ENCODE measurements at regions of chr1 and their contacts with region 1.

Region 1: GRCh38 chr1:245825128-245825901 is 670.5 kb downstream of the KIF26B start:
- DNase-seq: no peak
- ATAC-seq: peak; percentile 74

Region 2: DNA sequence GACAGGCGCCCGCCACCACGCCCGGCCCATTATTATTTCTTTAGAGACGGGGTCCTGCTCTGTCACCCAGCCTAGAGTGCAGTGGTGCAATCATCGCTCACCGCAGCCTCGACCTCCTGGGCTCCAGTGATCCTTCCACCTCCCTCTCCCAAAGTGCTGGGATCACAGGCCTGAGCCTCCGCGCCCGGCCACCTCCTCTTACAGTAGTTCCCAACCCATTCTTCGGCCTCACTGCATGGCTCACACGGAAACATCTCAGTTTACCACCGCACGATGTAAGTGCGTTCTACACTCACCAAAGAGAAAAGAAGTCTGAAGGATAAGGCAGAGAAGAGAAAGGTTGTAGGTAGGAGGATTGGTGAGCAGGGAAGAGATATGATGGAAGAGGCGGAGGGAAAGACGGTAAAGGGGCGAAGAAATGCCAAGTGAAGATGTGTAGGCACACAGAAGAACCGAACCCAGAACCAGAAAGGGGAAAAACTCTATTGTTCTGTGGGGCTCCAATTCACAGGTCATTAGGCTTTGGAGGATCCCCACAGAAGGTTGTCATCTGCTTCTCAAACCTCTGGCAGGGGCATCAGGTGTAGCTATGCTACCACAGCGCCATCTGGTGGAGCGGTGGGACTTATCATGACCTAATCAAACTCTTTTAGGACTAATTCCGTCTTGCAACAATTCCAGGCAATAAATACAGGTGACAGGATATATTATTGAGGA is 177.6 kb after region 1 on chr1:
- intact Hi-C with region 1: loop called (anchors 5 kb)
- DNase-seq: peak; percentile 91
- ATAC-seq: peak; percentile 85

Measured in Right ventricle myocardium superior (tissue), 1 donor.